CD4-positive, alpha-beta memory T cell (primary cell): ENCODE measurements at regions of chr11 and their contacts with region 1.

Region 1: GRCh38 chr11:1674173-1675131 is 22.5 kb upstream of the KRTAP5-6 start:
- DNase-seq: no peak
- H3K4me3 ChIP-seq: no peak overlapping the region
- H3K4me3 Mint-ChIP-seq: no peak overlapping the region
- H3K27ac ChIP-seq: no peak overlapping the region
- H3K27ac Mint-ChIP-seq: no peak overlapping the region
- H3K4me1 ChIP-seq: no peaks in the 10 kb centered on the region
- H3K4me1 Mint-ChIP-seq: no peaks in the 10 kb centered on the region
- H3K27me3 ChIP-seq: no peaks in the 10 kb centered on the region
- H3K27me3 Mint-ChIP-seq: peaks cover 17 to 24% of the 10 kb centered on the region in 2 donors

Region 2: DNA sequence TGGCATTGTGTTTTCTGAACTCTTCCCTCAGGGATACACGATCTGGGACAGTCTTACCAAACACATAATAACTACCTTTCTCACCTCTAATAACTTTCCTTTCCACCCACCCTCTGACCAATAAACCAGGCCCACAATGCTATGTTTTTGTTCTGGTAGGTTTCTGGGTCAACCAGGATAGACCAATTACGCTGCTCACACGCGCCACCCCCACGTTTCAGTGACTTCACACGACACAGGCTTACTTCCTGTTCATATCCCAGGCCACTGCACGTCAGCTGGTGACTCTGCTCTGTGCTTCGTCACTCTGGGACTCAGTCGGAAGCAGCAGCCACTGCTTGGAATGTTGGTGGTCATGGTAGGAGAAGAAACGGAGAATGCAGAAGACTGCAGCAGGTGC is 55.0 kb before region 1 on chr11:
- CTCF ChIA-PET with region 1: no interaction called
- POLR2A ChIA-PET with region 1: no interaction called
- intact Hi-C with region 1: no loop called
- DNase-seq: peak; percentile 37 to 60 (median 45)
- H3K4me3 ChIP-seq: no peak overlapping the region
- H3K4me3 Mint-ChIP-seq: peak overlapping the region in 6 of 8 donors; percentile 44 to 84 (median 54)
- H3K27ac ChIP-seq: no peak overlapping the region
- H3K27ac Mint-ChIP-seq: peak overlapping the region in 5 of 7 donors; percentile 60 to 93 (median 75)
- H3K4me1 ChIP-seq: peaks cover 9% of the 10 kb centered on the region
- H3K4me1 Mint-ChIP-seq: peaks cover 5 to 10% (median 6%) of the 10 kb centered on the region in 4 donors
- H3K27me3 ChIP-seq: no peaks in the 10 kb centered on the region
- H3K27me3 Mint-ChIP-seq: peaks cover 5 to 19% of the 10 kb centered on the region in 2 donors

Region 3: GRCh38 chr11:1908618-1909017 is 234.2 kb after region 1 on chr11:
- CTCF ChIA-PET with region 1: no interaction called
- POLR2A ChIA-PET with region 1: no interaction called
- intact Hi-C with region 1: loop called (anchors 5 kb)
- DNase-seq: no peak
- H3K4me3 ChIP-seq: no peak overlapping the region
- H3K4me3 Mint-ChIP-seq: no peak overlapping the region
- H3K27ac ChIP-seq: no peak overlapping the region
- H3K27ac Mint-ChIP-seq: no peak overlapping the region
- H3K4me1 ChIP-seq: no peaks in the 10 kb centered on the region
- H3K4me1 Mint-ChIP-seq: no peaks in the 10 kb centered on the region
- H3K27me3 ChIP-seq: no peaks in the 10 kb centered on the region
- H3K27me3 Mint-ChIP-seq: peaks cover 3 to 10% of the 10 kb centered on the region in 2 donors